ENCODE measurements at regions of chr11 and their contacts with region 1.

Region 1: DNA sequence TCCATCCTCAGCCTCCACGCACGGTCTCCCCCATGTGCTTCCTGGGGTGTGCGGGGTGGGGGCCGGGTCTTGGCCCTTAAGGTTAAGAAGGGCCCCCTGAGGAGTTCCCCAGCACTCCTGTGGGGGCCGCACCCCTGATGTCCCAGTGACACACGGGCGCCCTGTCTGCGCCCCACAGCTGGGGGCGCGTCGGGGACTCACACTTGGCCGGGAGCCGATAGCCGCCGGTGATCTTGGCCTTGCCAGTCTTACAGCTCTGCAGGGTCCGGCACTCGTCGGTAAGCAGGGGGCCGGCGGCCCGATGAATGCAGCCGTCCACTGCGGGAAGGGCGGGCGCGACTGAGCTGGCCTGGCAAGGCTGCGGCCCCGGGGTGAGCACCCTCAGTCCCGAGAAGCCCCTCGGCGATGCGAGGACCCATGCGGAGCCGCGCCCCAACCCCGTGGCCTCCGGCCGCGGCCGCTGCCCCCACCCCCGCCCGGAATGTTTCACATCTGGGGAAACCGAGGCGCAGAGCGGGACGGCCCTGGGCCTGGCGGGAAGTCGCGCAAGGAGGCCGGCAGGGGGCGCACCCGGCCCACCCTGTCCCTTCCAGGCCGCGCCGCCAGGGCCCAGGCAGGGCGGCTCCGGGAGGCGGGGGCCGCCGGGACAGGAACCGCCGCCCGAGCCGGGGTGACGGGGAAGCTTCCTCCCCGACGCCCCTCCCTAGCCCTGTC is 13.9 kb downstream of the OTUB1 start:
- DNase-seq: peak; percentile 89
- H3K4me3 ChIP-seq: peak overlapping the region; percentile 67
- H3K27ac ChIP-seq: no peak overlapping the region
- H3K4me1 ChIP-seq: peaks cover 4% of the 10 kb centered on the region
- H3K27me3 ChIP-seq: no peaks in the 10 kb centered on the region

Region 2: GRCh38 chr11:64148200-64148916 is 148.2 kb after region 1 on chr11:
- in situ Hi-C with region 1: loop called (anchors 10 kb)
- DNase-seq: peak; percentile 73
- H3K4me3 ChIP-seq: peak overlapping the region; percentile 35; the same call in 1 of the 2 replicates
- H3K27ac ChIP-seq: no peak overlapping the region
- H3K4me1 ChIP-seq: no peaks in the 10 kb centered on the region
- H3K27me3 ChIP-seq: no peaks in the 10 kb centered on the region

Measured in GM23248 (cell line).